ENCODE measurements at regions of chr12 and their contacts with region 1.

Region 1: DNA sequence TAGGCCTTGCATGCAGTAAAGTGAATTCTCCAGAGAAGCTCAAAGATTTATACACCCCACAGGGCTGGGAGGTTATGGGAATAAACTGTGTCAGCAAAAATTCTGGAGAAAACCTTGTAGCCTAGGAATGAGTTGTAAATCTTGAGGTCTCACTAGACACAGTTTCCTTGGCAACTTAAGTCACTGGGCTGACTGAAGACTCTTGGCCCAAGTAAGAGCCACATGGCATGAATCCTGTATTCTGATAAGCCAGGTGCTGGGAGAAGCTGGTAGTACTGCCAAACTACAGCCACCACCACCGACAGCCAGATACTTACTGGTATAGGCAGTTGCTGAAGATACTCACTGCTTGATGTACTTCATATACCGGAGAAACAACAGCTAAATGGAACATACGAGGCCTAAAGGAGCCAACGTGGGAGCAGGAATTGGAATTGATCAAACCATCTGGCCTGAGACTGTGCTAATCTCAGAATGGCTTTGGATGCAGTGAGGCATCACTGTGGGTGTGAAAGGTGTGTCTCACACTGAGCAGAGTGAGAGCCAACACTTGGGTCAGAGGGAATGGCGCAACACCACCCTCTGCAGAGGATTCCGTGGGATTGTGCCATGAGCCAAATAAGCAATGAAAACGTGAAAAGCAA is 102.8 kb upstream of the TMCC3 start:
- DNase-seq: no peak
- ATAC-seq: no peak

Region 2: DNA sequence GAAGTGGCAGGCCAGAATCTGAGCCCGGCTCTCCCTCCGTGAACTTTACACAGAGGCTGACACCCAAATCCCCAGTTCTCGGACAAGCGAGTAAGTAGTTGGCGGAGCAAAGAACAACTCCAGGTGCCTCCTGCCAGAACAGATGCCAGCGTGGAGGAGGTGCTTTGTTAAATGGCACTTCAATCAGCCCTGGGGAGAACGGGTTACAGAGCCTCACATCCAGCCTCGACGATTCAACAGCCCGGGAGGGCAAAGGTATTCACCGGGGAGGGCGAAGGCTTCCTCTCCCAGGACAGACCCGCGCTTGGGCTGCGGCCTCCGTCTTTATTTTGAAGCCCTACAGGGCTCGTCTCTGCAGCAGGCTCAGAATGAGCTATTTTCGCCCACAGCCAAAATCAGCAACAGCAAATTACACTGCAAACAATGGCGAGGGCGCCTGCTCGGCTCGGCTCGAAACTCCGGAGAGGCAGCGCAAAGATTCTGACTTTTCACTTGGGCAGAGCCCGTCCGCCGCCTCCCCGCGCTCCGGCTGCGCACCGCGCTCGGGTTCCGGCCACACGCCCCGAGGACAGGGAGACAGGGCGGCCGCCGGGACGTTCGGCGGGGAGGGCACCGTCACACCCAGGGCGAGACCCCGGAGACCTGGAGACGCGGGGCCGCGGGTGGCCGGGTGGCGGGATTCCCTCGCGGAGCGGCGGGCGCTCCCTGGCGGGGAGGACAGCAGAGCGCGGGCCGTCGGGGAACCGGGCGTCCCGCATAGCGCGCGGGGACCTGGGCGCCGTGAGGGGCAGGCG is 103.6 kb before region 1 on chr12:
- intact Hi-C with region 1: loop called (anchors 10 kb)
- DNase-seq: peak; percentile 79
- ATAC-seq: peak; percentile 74